Right cardiac atrium (tissue), 5 donors: ENCODE measurements at regions of chr17 and their contacts with region 1.

Region 1: DNA sequence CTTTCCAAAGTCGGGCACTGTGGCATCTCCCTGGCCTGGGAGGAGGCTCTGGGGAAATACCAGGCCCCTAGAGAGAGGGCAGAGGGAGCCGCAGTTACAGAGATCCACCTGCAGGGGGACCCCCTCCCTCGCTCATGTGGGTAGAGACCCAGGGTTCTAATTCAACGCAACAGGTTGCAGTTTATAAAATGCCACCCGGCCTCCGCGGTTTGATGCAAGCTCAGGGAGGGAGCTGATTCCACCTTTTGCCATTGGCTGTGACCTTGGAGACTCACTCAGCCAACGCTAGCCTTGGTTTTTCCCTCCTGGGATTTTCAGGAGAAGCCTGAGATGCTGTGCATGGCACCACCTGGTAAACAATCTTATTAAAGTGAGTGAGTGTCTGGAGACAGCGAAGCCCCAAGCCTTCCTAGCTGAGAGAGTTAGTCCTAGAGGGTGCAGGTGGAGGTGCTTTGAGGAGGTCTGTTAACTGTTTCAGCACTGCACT is 12.1 kb downstream of the TTLL6 start:
- DNase-seq: peak; percentile 35 to 76 (median 74)
- ATAC-seq: peak; percentile 85 to 88
- H3K4me3 ChIP-seq: no peak overlapping the region
- H3K27ac ChIP-seq: no peak overlapping the region
- H3K4me1 ChIP-seq: no peaks in the 10 kb centered on the region
- H3K27me3 ChIP-seq: no peaks in the 10 kb centered on the region

Region 2: GRCh38 chr17:49022391-49022941 is 217.5 kb after region 1 on chr17:
- intact Hi-C with region 1: loop called in 1 of 4 experiments (anchors 10 kb)
- DNase-seq: no peak
- ATAC-seq: peak in 1 of 2 donors; percentile 31
- H3K4me3 ChIP-seq: no peak overlapping the region
- H3K27ac ChIP-seq: no peak overlapping the region
- H3K4me1 ChIP-seq: no peaks in the 10 kb centered on the region
- H3K27me3 ChIP-seq: peaks cover 2% of the 10 kb centered on the region

Region 3: GRCh38 chr17:49031965-49032928 is 227.3 kb after region 1 on chr17:
- intact Hi-C with region 1: loop called in 2 of 4 experiments (anchors 5 to 10 kb)
- DNase-seq: no peak
- ATAC-seq: peak; percentile 29 to 72
- H3K4me3 ChIP-seq: no peak overlapping the region
- H3K27ac ChIP-seq: no peak overlapping the region
- H3K4me1 ChIP-seq: no peaks in the 10 kb centered on the region
- H3K27me3 ChIP-seq: no peaks in the 10 kb centered on the region